Left ventricle myocardium inferior (tissue), 1 donor: ENCODE measurements at regions of chr12 and their contacts with region 1.

Region 1: GRCh38 chr12:7460375-7461259 is 16.7 kb upstream of the CD163L1 start:
- DNase-seq: peak; percentile 29
- H3K4me3 ChIP-seq: no peak overlapping the region
- H3K27ac ChIP-seq: no peak overlapping the region
- H3K4me1 ChIP-seq: no peaks in the 10 kb centered on the region
- H3K27me3 ChIP-seq: peaks cover 13% of the 10 kb centered on the region
- CTCF ChIP-seq: peak; percentile 85

Region 2: GRCh38 chr12:7219599-7220243 is 240.9 kb before region 1 on chr12:
- intact Hi-C with region 1: loop called (anchors 10 kb)
- DNase-seq: peak; percentile 44
- H3K4me3 ChIP-seq: no peak overlapping the region
- H3K27ac ChIP-seq: no peak overlapping the region
- H3K4me1 ChIP-seq: no peaks in the 10 kb centered on the region
- H3K27me3 ChIP-seq: no peaks in the 10 kb centered on the region
- CTCF ChIP-seq: peak; percentile 87

Region 3: GRCh38 chr12:8446642-8447547 is 986.3 kb after region 1 on chr12:
- intact Hi-C with region 1: no loop called
- DNase-seq: no peak
- H3K4me3 ChIP-seq: no peak overlapping the region
- H3K27ac ChIP-seq: no peak overlapping the region
- H3K4me1 ChIP-seq: no peaks in the 10 kb centered on the region
- H3K27me3 ChIP-seq: no peaks in the 10 kb centered on the region
- CTCF ChIP-seq: no peak